ENCODE measurements at regions of chr11 and their contacts with region 1.

Region 1: DNA sequence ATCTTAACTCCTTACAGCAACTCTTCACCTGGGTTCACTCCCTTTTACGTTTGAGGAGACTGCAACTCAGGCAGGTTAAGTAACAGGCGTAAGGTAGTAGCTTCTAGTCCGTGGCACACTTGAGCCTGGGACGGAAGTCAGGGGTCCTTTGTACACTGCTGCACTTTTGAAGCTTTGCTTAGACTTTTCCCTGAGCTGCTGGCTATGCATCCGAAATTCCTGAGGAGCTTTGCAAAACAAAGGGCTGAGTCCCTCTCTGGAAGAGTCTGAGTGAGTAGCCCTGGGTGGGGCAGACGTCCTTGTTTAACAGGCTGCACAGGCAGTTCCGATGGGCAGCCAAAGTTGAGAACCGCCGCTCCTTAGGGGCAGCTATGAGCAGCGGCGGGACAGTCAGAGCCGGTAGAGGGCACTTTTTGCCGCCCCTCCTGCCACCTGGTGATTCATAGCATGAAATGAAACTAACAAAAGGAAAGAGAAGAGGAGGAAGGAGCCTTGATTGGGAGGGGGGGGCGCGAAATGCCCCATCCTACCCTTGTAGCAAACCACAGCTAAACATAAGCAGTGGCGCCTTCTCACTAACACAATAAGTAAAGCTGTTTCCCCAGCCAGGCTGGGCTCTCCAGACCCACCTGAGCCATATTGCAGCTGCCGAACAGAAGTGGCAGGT is 1.4 kb downstream of the TMEM109 start:
- DNase-seq: peak; percentile 62 to 84
- ATAC-seq: peak; percentile 61 to 78 (median 68)
- H3K4me3 ChIP-seq: peak overlapping the region; percentile 75
- H3K4me3 Mint-ChIP-seq: peak overlapping the region; percentile 95
- H3K27ac ChIP-seq: peak overlapping the region; percentile 91
- H3K27ac Mint-ChIP-seq: peak overlapping the region; percentile 92 to 96
- H3K4me1 ChIP-seq: peaks cover 62% of the 10 kb centered on the region
- H3K4me1 Mint-ChIP-seq: peaks cover 58% of the 10 kb centered on the region in 2 donors
- H3K27me3 ChIP-seq: no peaks in the 10 kb centered on the region
- H3K27me3 Mint-ChIP-seq: no peaks in the 10 kb centered on the region
- CTCF ChIP-seq: peak; percentile 44

Region 2: DNA sequence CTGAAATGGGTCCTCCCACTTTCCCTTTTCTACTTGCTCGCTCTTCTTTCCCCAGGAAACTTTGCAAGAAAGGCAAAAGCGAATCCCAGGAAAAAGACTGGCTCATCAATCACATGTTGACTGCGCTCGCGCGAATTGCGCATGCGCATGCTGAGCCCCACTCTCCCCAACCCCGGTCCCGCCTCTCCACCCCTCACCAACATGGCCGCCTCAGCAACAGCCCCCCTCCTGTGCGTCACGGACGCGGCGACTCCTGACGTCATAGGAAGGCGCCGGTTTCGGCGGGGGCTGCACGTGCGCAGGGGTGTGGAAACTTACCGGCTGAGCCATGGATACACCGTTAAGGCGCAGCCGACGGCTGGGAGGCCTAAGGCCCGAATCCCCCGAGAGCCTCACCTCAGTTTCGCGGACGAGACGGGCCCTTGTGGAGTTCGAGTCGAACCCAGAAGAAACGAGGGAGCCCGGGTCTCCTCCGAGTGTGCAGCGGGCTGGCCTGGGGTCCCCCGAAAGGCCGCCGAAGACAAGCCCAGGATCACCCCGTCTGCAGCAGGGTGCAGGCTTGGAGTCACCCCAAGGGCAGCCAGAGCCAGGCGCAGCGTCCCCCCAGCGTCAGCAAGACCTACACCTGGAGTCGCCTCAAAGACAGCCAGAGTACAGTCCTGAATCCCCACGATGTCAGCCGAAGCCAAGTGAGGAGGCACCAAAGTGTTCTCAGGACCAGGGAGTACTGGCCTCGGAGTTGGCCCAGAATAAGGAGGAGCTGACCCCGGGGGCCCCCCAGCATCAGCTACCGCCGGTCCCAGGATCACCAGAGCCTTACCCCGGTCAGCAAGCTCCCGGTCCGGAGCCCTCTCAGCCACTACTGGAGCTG is 73.3 kb before region 1 on chr11 and contains the start of gene CCDC86:
- intact Hi-C with region 1: loop called (anchors 1 kb)
- DNase-seq: peak; percentile 98 to 99
- ATAC-seq: peak; percentile 96 to 98 (median 97)
- H3K4me3 ChIP-seq: peak within 1 kb of the TSS; percentile 99
- H3K4me3 Mint-ChIP-seq: peak within 1 kb of the TSS; percentile 95
- H3K27ac ChIP-seq: peak within 1 kb of the TSS; percentile 73
- H3K27ac Mint-ChIP-seq: peak within 1 kb of the TSS; percentile 91 to 92
- H3K4me1 ChIP-seq: peaks cover 33% of the 10 kb centered on the region
- H3K4me1 Mint-ChIP-seq: peaks cover 39 to 48% of the 10 kb centered on the region in 2 donors
- H3K27me3 ChIP-seq: no peaks in the 10 kb centered on the region
- H3K27me3 Mint-ChIP-seq: no peaks in the 10 kb centered on the region
- CTCF ChIP-seq: no peak
- total RNA-seq, gene CCDC86: 10.6 to 12.5 (median 10.7) TPM